MCF 10A (cell line): ENCODE measurements at regions of chr5 and their contacts with region 1.

Region 1: GRCh38 chr5:6632917-6633468 is at the starts of genes NSUN2 and SRD5A1:
- DNase-seq: peak; percentile 88
- H3K4me3 Mint-ChIP-seq: peak within 1 kb of the TSS; percentile 96
- H3K27ac Mint-ChIP-seq: peak within 1 kb of the TSS; percentile 95
- H3K4me1 Mint-ChIP-seq: peaks cover 32% of the 10 kb centered on the region
- H3K27me3 Mint-ChIP-seq: no peaks in the 10 kb centered on the region
- CTCF ChIP-seq: no peak
- total RNA-seq, gene NSUN2: 89.6 and 95.7 TPM in 2 replicates
- total RNA-seq, gene SRD5A1: 12.2 and 12.4 TPM in 2 replicates

Region 2: DNA sequence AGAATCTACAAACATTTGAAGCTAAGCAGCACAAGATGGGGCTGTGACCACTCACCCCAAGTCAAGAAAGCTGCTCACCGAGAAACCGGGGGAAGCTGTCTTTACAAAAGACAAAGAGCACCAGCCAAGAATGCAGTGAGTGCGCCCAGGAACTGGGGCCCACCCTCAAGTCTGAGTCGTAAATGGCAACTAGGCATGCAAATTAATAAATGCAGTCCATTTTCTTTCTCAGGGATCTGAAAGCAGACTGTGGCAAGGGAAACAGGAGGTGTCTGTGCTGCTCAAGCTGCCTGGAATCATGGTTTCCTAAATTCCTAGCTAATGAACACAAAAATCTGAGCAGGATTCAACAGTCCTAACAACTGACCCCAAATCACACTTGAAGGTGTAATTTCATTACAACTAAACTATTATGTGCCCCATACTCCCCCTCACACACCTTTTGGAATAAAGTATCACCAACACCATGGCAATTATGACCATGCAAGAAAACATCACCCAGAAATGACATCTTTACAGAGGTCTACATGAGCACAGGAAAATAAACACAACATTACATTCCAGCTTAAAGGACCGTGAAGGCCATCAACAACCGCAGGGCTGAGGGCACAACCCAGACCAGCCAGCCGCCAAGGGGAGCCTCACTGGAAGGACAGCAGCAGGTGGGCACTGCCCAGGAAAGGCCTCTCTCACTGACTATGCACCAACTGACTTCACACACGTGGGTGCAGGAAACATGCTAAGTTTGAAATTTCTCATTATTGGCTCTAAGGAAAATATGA is 17.8 kb before region 1 on chr5:
- CTCF ChIA-PET with region 1: interaction called, 6 read pairs
- POLR2A ChIA-PET with region 1: interaction called, 10 read pairs
- intact Hi-C with region 1: no loop called
- DNase-seq: no peak
- H3K4me3 Mint-ChIP-seq: no peak overlapping the region
- H3K27ac Mint-ChIP-seq: no peak overlapping the region
- H3K4me1 Mint-ChIP-seq: peaks cover 6% of the 10 kb centered on the region
- H3K27me3 Mint-ChIP-seq: no peaks in the 10 kb centered on the region
- CTCF ChIP-seq: no peak

Region 3: GRCh38 chr5:6675763-6676499 is 42.9 kb after region 1 on chr5:
- CTCF ChIA-PET with region 1: interaction called, 5 read pairs
- POLR2A ChIA-PET with region 1: interaction called, 19 read pairs
- intact Hi-C with region 1: no loop called
- DNase-seq: no peak
- H3K4me3 Mint-ChIP-seq: no peak overlapping the region
- H3K27ac Mint-ChIP-seq: no peak overlapping the region
- H3K4me1 Mint-ChIP-seq: peaks cover 14% of the 10 kb centered on the region
- H3K27me3 Mint-ChIP-seq: no peaks in the 10 kb centered on the region
- CTCF ChIP-seq: no peak

Region 4: DNA sequence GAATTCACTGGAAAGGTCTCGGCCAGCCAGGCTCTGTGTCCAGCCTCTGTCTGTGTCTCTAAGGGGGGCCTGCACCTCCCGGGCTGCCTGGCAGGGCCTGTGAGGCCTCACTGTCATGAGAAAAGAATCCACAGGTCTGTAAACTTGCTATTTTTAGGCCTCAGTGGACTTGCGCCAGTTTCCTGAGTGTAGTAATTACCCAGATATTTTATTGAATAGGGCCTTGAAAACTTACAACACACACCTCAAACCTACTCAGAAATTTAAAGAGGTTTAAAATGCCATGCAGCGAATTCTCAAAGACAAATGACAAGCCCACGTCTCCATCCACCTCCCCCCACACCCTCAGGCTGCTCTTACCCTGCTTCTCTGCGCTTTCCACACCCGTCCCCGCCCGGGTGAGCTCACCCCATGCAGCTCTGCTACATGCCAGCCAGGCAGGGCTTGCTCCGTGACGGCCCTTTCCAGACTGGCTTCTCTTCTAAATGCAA is 71.4 kb after region 1 on chr5:
- CTCF ChIA-PET with region 1: interaction called, 3 read pairs
- POLR2A ChIA-PET with region 1: interaction called, 16 read pairs
- intact Hi-C with region 1: no loop called
- DNase-seq: peak; percentile 86
- H3K4me3 Mint-ChIP-seq: peak overlapping the region; percentile 53
- H3K27ac Mint-ChIP-seq: peak overlapping the region; percentile 96
- H3K4me1 Mint-ChIP-seq: peaks cover 24% of the 10 kb centered on the region
- H3K27me3 Mint-ChIP-seq: peaks cover 13% of the 10 kb centered on the region
- CTCF ChIP-seq: no peak

Region 5: DNA sequence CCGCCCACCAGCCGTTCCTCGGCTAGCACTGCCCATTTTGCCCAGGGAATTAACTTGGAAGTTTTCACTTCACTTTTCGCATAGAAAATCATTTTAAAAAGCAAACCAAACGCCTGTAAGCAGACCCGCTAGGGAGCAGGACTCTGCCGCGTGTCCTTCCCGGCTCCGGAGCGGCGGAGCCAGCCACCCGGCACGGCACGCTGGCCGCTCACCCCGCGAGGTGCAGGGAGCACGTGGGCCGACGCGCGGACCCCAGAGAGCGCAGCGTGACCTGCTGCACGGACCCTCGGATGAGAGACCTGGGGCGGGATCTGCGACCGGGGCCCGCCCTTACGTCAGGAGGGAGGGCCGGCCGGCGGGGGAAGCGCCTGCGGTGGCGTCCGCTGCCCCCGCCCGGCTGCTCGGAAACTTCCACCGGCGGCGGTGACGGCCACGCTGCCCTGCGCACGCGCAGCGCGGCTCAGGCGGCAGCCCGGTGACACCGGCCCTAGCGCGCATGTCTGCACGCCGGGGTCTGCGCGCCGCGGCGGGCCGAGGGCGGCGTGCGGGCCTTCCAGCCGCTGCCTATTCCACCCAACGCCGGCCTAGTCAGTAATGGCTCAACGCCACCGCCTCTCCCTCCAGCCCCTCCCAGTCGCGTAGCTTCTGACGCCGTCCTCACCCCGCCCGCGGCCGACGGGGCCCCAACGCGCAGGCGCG is 79.7 kb after region 1 on chr5:
- CTCF ChIA-PET with region 1: interaction called, 8 read pairs
- POLR2A ChIA-PET with region 1: interaction called, 53 read pairs
- intact Hi-C with region 1: loop called (anchors 1 kb)
- DNase-seq: peak; percentile 96
- H3K4me3 Mint-ChIP-seq: peak overlapping the region; percentile 75
- H3K27ac Mint-ChIP-seq: peak overlapping the region; percentile 83
- H3K4me1 Mint-ChIP-seq: peaks cover 24% of the 10 kb centered on the region
- H3K27me3 Mint-ChIP-seq: no peaks in the 10 kb centered on the region
- CTCF ChIP-seq: no peak

Region 6: DNA sequence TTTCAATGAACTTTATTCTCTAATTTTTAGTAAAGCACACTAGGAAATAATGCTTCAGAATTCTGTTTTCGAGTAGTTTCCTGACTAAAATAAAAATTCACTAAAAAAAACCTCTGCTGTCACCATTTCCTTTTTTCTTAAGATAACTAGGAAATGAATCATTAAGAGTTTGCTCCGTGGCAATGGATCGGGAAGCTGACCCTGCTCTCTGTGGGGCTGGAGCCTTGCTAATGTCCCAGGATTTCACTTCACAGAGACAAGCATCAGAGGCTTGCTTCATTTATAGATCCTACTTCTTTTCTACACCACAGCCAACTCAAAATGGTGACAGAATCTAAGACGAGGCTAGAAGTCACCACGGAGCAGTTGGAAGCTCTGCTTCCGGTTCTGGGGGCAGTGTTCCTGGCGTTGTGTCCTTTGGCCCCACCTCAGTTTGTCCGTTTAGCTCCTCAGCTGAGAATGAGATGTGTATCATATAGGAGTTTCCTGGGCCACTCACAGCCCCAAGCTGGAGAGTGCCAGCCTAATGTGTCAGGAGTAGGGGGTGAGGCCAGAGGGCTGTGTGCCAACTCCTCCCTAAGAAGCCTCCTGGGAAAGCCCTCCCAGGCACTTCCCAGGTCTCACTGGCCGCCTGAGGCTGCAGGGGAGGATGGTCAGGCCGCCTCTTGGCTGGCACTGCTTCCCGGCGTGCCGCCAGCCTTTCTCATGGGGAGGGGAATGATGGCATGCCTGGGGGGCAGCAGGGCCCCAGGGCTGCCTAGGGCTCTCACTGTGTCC is 99.8 kb after region 1 on chr5:
- CTCF ChIA-PET with region 1: interaction called, 6 read pairs
- POLR2A ChIA-PET with region 1: interaction called, 14 read pairs
- intact Hi-C with region 1: loop called (anchors 5 kb)
- DNase-seq: peak; percentile 91
- H3K4me3 Mint-ChIP-seq: peak overlapping the region; percentile 50
- H3K27ac Mint-ChIP-seq: peak overlapping the region; percentile 74
- H3K4me1 Mint-ChIP-seq: peaks cover 34% of the 10 kb centered on the region
- H3K27me3 Mint-ChIP-seq: no peaks in the 10 kb centered on the region
- CTCF ChIP-seq: no peak